Activated B cell treated with CpG ODN at 0.5 μM for 24 hours (primary cell): ENCODE measurements at regions of chr4 and their contacts with region 1.

Region 1: DNA sequence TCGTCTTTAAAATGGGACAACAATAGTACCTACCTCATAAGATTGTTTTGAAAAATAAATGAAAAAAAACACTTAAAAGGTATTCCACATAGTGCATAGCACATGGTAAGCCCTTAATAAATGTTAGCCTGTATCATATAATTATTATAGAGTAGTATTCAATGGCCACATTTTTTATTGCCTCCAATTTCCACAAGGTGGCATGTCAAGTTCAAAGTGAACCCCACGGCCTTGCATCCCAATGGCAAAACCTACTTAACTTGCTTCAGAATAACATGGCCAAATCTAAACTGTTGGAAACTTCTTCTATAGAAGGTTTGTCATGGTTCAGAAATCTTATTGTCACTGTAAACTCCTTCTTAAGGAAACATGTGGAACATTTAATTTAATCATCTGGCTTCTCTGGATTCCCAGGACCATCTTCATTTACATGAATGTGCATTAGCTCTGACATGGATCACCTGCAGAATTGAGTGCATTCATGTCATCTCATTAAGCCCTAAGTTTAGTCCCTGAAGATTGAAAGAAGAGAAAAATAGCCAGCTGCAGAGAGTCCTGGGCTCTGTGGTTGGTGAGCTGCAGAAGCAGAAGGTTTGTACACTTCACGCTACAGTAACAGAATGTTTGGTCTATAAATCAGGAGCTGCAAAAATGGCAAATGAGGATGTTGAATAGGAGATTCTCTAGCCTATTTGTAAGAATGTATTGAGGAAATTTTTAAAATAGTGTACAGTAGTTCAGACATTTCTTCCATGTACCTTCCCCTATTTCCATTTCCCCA is 61.0 kb downstream of the ANXA3 start:
- DNase-seq: no peak
- ATAC-seq: peak; percentile 28
- H3K4me3 Mint-ChIP-seq: peak overlapping the region; percentile 15
- H3K27ac Mint-ChIP-seq: peak overlapping the region; percentile 87
- H3K4me1 Mint-ChIP-seq: peaks cover 67% of the 10 kb centered on the region
- H3K27me3 Mint-ChIP-seq: no peaks in the 10 kb centered on the region
- CTCF ChIP-seq: peak; percentile 28

Region 2: DNA sequence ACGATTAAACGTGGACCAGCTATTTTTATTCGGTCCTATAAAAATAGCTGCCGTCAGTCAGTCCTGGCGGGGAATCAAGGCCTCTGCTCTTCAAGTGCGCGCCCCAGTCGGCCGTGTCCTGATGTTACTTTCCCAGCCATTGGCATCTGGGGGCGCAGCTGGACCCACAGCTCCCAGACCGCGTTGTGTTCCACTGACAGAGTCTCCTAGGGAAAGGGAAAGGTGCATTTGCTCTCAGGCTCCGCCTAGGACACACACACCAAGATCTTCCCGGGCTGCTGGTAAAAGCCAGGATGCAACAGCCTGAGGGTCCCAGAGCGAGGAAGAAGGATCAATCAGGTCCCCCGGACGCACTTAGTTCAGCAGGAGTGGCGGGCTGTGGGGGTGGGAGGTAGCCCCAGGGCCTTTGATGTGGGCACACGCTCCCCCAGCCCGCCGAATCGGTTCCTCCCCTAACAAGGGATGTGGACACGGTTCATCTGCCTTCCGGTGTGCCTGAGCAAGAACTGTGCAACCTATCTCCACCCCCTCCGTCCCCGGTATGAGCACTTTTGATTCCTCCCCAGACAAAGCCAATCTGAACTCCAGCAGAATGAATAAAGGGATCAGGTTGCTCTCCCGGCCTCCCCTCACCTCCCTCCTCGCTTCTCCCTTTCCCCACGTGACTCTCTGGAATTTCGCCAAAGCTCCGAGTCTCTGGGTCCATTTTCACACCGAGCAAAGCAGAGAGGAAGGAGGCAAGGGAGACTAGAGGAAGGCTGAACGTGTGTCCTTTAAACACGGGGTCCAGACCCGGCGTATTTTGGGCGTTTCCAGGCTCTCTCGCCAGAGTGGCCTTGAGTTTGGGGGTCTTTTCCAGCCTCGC is 556.1 kb before region 1 on chr4:
- CTCF ChIA-PET with region 1: no interaction called
- POLR2A ChIA-PET with region 1: no interaction called
- intact Hi-C with region 1: loop called (anchors 10 kb)
- DNase-seq: peak; percentile 29
- ATAC-seq: peak; percentile 74
- H3K4me3 Mint-ChIP-seq: peak overlapping the region; percentile 93
- H3K27ac Mint-ChIP-seq: no peak overlapping the region
- H3K4me1 Mint-ChIP-seq: peaks cover 32% of the 10 kb centered on the region
- H3K27me3 Mint-ChIP-seq: peaks cover 46% of the 10 kb centered on the region
- CTCF ChIP-seq: no peak

Region 3: GRCh38 chr4:78638337-78639172 is 26.0 kb after region 1 on chr4:
- CTCF ChIA-PET with region 1: interaction called, 51 read pairs
- POLR2A ChIA-PET with region 1: interaction called, 16 read pairs
- intact Hi-C with region 1: loop called (anchors 1 kb)
- DNase-seq: no peak
- ATAC-seq: peak; percentile 78
- H3K4me3 Mint-ChIP-seq: peak overlapping the region; percentile 62
- H3K27ac Mint-ChIP-seq: peak overlapping the region; percentile 93
- H3K4me1 Mint-ChIP-seq: peaks cover 71% of the 10 kb centered on the region
- H3K27me3 Mint-ChIP-seq: no peaks in the 10 kb centered on the region
- CTCF ChIP-seq: no peak

Region 4: DNA sequence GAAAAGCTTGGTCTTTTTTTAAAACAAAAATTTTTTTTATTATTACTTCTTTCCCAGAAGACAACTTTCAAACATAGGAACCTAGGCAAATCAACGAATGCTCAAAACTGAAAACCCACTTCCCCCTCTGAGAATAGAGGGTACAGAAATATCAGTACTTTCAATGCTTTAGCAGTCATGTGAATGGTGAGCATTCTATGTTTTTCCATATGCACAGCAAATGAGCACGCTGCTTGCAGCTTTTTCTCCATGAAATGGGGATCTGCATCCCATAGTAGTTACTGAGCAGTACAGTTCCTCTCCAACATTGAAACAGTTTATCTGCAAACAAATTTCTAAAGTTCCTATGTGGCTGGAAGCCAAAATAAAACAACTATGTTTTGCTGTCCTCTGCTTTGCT is 55.2 kb after region 1 on chr4:
- CTCF ChIA-PET with region 1: interaction called, 3 read pairs
- POLR2A ChIA-PET with region 1: interaction called, 7 read pairs
- intact Hi-C with region 1: loop called (anchors 1 kb)
- DNase-seq: no peak
- ATAC-seq: peak; percentile 79
- H3K4me3 Mint-ChIP-seq: peak overlapping the region; percentile 54
- H3K27ac Mint-ChIP-seq: peak overlapping the region; percentile 83
- H3K4me1 Mint-ChIP-seq: peaks cover 85% of the 10 kb centered on the region
- H3K27me3 Mint-ChIP-seq: no peaks in the 10 kb centered on the region
- CTCF ChIP-seq: no peak

Region 5: DNA sequence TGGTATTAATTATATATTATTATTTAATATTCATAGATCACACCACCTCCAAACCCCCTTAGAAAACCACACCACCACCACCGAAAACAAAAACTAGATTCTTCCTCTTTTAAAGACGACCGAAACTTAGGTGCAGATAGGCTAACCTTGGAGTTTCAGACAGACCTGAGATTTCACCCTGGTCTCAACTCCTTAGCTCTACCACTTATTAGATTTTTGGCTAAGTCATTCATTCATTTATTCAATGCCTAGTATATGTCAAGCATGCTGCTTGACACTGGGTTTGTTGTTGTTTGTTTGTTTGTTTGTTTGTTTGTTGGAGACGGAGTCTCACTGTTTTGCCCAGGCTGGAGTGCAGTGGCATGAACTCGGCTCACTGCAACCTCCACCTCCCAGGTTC is 154.1 kb after region 1 on chr4:
- CTCF ChIA-PET with region 1: no interaction called
- POLR2A ChIA-PET with region 1: interaction called, 12 read pairs
- intact Hi-C with region 1: no loop called
- DNase-seq: no peak
- ATAC-seq: peak; percentile 94
- H3K4me3 Mint-ChIP-seq: peak overlapping the region; percentile 68
- H3K27ac Mint-ChIP-seq: peak overlapping the region; percentile 84
- H3K4me1 Mint-ChIP-seq: peaks cover 33% of the 10 kb centered on the region
- H3K27me3 Mint-ChIP-seq: no peaks in the 10 kb centered on the region
- CTCF ChIP-seq: no peak

Region 6: DNA sequence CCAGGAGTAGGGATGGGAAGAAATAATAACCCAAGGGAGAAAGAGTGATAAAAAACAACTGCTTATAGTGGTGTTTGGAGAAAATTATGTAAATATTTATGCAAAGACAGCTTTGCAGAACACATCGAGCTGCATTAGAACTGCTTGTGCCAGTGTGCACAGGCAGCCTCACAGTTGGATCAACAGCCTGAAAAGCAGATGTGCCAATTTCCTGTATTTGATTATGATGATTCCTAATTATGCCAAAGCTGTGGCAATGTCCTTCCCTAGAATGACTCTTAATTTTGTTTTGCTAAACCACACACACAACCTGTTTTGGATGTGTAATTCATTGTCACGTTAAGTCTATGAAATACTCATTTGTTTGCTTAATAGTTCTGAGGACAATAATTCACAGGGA is 1491.0 kb after region 1 on chr4:
- CTCF ChIA-PET with region 1: no interaction called
- POLR2A ChIA-PET with region 1: no interaction called
- intact Hi-C with region 1: no loop called
- DNase-seq: no peak
- ATAC-seq: no peak
- H3K4me3 Mint-ChIP-seq: no peak overlapping the region
- H3K27ac Mint-ChIP-seq: no peak overlapping the region
- H3K4me1 Mint-ChIP-seq: no peaks in the 10 kb centered on the region
- H3K27me3 Mint-ChIP-seq: peaks cover 6% of the 10 kb centered on the region
- CTCF ChIP-seq: no peak